Lower leg skin (tissue), 4 donors: ENCODE measurements at regions of chr16 and their contacts with region 1.

Region 1: GRCh38 chr16:54473226-54473993 is 186.8 kb upstream of the IRX3 start:
- DNase-seq: peak in 1 of 2 donors; percentile 47
- H3K4me3 ChIP-seq: no peak overlapping the region
- CTCF ChIP-seq: no peak
- POLR2A ChIP-seq: no peak

Region 2: DNA sequence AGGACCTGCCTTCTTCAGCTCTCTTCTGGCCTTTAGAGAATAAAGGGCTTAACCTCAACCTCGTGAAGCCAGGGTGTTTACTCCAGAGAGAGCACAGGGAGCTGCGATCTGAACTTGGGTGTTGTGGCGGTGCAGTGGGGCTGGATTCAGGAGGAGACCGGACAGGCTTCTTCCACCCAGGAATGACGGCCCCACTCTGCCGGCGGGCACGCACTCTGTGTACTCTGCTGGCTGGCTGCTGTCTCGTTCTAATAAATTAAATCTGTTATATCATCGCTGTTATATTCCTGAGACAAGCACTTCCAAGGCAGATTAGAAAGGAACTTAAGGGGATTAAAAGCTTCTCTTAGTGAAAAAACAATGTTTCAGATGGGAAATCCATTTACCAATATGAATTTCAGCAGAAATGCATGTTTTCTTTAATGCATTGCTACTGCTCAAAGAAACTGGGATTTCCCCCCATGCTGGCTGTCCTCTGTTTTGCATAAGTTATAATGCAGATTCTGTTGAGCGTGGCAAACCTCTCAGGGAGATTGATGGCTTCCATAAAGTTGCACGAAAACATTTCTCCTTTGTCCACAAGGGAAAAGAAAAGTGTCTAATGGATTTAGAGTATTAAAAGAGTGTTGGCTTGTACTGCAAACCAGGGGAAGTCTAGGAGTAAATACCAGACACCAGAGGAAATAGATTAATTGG is 18.2 kb before region 1 on chr16:
- intact Hi-C with region 1: loop called (anchors 2 kb)
- DNase-seq: no peak
- H3K4me3 ChIP-seq: no peak overlapping the region
- CTCF ChIP-seq: no peak
- POLR2A ChIP-seq: no peak

Region 3: DNA sequence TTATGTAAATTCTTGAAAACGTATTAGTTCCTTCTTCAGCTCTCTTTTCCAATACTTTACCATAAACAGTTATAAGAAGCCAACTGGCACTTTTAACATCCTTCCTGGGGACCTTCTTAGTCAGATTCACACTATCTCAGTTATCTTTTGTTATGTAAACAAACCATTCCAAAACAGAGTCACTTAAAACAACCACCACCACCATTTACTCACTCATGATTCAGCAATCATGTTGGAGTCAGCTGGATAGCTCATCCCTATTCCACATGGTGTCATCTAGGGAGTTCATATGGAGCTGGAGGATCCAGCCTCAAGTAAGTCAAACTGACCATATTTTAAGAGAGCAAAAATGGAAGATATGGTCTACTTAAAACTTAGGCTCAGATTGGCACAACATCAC is 53.5 kb after region 1 on chr16:
- intact Hi-C with region 1: no loop called
- DNase-seq: no peak
- H3K4me3 ChIP-seq: no peak overlapping the region
- CTCF ChIP-seq: no peak
- POLR2A ChIP-seq: no peak